Common myeloid progenitor, CD34-positive (primary cell): ENCODE measurements at regions of chr16 and their contacts with region 1.

Region 1: DNA sequence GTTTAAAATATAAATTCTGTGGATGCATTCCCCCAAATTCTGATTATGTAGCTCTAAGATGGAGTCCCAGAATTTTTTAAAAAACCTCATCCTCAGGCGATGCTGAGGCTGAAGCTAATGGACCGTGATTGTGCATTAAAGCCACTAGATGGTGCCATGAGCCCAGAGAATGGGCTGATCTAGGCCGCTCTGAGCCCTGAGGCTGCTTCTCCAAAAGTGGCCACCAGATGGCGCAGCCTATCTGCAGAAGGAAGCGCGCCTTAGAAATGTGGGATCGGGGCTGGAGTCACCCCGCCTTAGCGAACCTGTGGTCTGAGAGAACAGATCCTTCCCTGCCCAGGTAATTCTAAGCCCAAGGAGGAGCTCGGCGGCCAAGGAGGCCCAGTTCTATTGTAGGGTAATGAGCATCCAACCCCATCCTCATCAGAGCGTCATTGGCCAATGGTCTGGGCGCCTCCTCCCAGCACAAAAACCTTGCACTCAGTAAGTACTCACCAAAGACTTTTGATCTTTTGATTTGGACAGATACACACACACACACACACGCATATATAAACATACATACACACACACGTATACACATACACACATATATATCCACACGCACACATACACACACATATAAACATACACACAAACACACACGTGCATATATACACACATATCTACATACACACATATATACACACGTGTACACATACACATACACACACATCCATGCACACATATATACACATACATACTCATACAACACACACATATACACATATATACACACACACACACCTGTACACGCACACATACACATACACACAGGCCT is 13.7 kb upstream of the MMP2 start:
- DNase-seq: peak; percentile 83 to 93 (median 87)
- H3K4me3 ChIP-seq: peak overlapping the region in 2 of 7 experiments; percentile 30 to 57
- H3K27ac ChIP-seq: no peak overlapping the region
- H3K4me1 ChIP-seq: peaks cover 0 to 5% (median 3%) of the 10 kb centered on the region in 4 experiments
- H3K27me3 ChIP-seq: peaks cover 0 to under 1% (median 0%) of the 10 kb centered on the region in 5 experiments

Region 2: DNA sequence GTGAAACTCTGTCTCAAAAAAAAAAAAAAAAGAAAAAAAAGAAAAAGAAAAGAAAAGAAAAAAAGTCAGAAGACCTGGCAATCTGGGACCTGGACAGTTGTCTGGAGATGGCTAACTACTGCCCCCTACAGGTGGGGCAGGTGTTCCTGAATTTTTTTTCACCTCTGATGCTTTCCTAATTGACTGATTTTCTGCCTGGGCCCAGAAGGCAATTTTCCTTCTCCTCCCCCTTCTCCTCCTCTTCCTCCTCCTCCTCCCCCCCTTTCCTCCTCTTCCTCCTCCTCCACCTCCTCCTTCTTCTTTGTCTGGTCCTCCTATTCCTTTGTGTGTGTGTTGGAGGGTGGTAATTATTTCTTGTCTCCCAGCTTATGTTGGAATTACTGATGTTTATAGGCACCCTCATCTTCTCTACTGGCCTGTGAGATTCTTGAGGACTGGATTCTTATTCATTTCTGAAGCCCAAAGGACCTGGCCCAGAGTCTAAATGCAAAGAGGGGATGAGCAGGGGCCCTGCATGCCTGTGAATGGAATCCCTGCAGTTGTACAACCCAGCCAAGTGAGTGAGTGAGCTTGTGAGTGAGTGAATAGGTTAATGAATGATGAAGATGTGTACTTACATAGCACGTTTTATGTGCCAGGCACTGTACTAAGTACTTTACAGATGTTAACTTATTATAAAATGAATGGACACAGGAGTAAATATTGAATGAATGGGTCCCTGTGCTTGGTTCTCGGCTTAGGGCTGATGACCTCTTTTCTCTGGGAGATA is 507.7 kb before region 1 on chr16:
- CTCF ChIA-PET with region 1: no interaction called
- POLR2A ChIA-PET with region 1: no interaction called
- DNase-seq: peak in 2 of 3 donors; percentile 55 to 56
- H3K4me3 ChIP-seq: no peak overlapping the region
- H3K27ac ChIP-seq: no peak overlapping the region
- H3K4me1 ChIP-seq: no peaks in the 10 kb centered on the region
- H3K27me3 ChIP-seq: peaks cover 0 to 13% (median 0%) of the 10 kb centered on the region in 5 experiments

Region 3: DNA sequence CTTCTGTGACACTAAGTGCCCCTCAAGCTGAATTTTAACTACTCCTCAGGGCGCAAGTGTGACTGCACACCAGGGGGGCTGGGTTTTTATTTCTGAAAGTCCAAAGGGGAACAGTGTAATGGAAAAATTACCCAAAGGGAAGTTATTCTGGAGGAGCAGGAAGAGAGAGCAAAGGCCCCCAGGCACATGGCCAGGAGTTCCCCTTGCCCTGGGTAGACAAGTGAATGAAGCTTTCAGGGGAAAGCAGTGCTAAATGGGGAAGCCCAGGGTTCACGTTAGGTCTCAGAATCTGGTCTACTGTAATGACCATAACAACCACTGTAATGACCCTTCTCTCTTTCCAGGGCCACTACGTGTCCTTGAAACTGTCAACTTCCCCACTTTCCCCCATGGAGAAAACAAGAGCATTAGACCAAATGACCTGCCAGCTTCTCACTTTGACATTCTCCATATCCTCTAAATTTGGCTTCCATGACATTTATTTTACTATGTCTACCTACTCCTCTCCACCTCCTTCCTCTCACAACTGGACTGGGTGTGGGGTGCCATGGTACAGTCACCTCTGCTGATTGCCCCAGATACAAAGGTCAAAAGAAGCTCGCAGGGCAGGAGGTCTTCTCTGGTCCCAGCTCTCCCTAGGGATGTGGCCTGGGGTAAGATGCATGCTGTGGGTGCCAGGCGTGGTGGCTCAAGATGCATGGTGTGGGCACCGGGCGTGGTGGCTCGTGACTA is 20.4 kb before region 1 on chr16:
- CTCF ChIA-PET with region 1: interaction called, 27 read pairs
- POLR2A ChIA-PET with region 1: no interaction called
- DNase-seq: peak; percentile 14 to 63 (median 62)
- H3K4me3 ChIP-seq: peak overlapping the region in 1 of 7 experiments; percentile 30
- H3K27ac ChIP-seq: no peak overlapping the region
- H3K4me1 ChIP-seq: peaks cover 0 to 18% (median 13%) of the 10 kb centered on the region in 4 experiments
- H3K27me3 ChIP-seq: no peaks in the 10 kb centered on the region

Region 4: GRCh38 chr16:55480228-55480661 is 15.0 kb after region 1 on chr16:
- CTCF ChIA-PET with region 1: interaction called, 21 read pairs
- POLR2A ChIA-PET with region 1: no interaction called
- DNase-seq: peak in 2 of 3 donors; percentile 31 to 50
- H3K4me3 ChIP-seq: peak overlapping the region in 6 of 7 experiments; percentile 34 to 81 (median 72)
- H3K27ac ChIP-seq: no peak overlapping the region
- H3K4me1 ChIP-seq: peaks cover 0 to 27% (median 21%) of the 10 kb centered on the region in 4 experiments
- H3K27me3 ChIP-seq: peaks cover 0 to 12% (median 0%) of the 10 kb centered on the region in 5 experiments

Region 5: DNA sequence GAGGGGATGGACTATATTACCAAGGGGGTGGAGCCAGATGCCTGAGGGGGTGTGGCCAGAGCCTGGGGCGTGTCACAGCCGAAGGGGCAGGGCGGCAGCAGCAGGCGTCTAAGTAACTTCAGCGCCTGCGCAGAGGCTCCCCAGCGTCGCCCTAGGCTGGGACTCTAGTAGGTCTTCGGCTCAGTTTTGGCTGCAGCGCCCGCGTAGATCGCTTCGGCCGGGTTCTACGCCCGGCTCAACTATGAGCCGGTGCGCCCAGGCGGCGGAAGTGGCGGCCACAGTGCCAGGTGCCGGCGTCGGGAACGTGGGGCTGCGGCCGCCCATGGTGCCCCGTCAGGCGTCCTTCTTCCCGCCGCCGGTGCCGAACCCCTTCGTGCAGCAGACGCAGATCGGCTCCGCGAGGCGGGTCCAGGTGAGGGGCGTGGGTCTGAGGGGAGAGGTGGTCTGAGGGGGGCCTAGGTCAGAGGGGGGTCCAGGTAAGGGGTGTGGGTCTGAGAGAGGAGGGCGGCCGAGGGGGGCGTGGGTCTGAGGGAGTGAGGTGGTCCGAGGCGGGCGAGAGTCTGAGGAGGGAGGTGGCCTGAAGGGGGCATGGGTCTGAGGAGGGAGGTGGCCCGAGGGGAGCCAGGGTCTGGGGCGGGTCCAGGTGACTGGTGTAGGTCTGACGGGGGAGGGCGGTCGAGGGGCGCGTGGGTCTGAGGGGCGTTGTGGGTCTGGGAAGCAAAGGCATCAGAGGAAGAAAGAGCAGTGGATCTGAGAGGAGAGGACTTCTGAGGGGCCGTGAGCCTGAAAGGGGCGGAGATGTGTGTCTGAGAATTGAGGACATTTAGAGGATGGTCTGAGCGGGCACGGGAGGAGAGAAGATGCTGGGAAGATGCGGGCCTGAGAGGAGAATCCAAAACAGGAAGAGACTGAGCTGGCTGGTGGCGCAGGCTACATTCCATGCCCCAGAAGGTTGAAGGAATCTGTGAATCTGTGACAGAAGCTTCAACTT is 43.9 kb after region 1 on chr16 and contains the start of gene LPCAT2:
- CTCF ChIA-PET with region 1: interaction called, 11 read pairs
- POLR2A ChIA-PET with region 1: no interaction called
- DNase-seq: peak; percentile 87 to 91 (median 89)
- H3K4me3 ChIP-seq: peak within 1 kb of the TSS; percentile 53 to 89 (median 83)
- H3K27ac ChIP-seq: peak within 1 kb of the TSS; percentile 21 to 63
- H3K4me1 ChIP-seq: peaks cover 4 to 26% (median 9%) of the 10 kb centered on the region in 4 experiments
- H3K27me3 ChIP-seq: no peaks in the 10 kb centered on the region

Region 6: GRCh38 chr16:55543472-55543871 is 78.2 kb after region 1 on chr16:
- CTCF ChIA-PET with region 1: interaction called, 74 read pairs
- POLR2A ChIA-PET with region 1: interaction called, 3 read pairs
- DNase-seq: peak in 2 of 3 donors; percentile 18 to 30
- H3K4me3 ChIP-seq: no peak overlapping the region
- H3K27ac ChIP-seq: no peak overlapping the region
- H3K4me1 ChIP-seq: peaks cover 0 to 12% (median 5%) of the 10 kb centered on the region in 4 experiments
- H3K27me3 ChIP-seq: no peaks in the 10 kb centered on the region

Region 7: GRCh38 chr16:55701442-55702319 is 236.4 kb after region 1 on chr16:
- CTCF ChIA-PET with region 1: interaction called, 335 read pairs
- POLR2A ChIA-PET with region 1: no interaction called
- DNase-seq: peak; percentile 70 to 86 (median 81)
- H3K4me3 ChIP-seq: no peak overlapping the region
- H3K27ac ChIP-seq: no peak overlapping the region
- H3K4me1 ChIP-seq: peaks cover 0 to 13% (median 8%) of the 10 kb centered on the region in 4 experiments
- H3K27me3 ChIP-seq: peaks cover 0 to 2% (median 0%) of the 10 kb centered on the region in 5 experiments